Activated T-helper 2 cell treated with anti-CD3 and anti-CD28 coated beads, Interferon-gamma antibody, Interleukin-2, Interleukin-4, amounts not matched to agents 10 μg/mL and 5 μg/mL and 100 μg/mL, durations not matched to agents 14 hours and 24 hours and 36 hours (primary cell): ENCODE measurements at regions of chrX and their contacts with region 1.

Region 1: GRCh38 chrX:97039363-97040029 is 155.8 kb downstream of the RPA4 start:
- DNase-seq: no peak
- H3K4me3 Mint-ChIP-seq: no peak overlapping the region
- H3K27ac Mint-ChIP-seq: peak overlapping the region; percentile 50
- H3K4me1 Mint-ChIP-seq: peaks cover 16% of the 10 kb centered on the region
- H3K27me3 Mint-ChIP-seq: no peaks in the 10 kb centered on the region

Region 2: DNA sequence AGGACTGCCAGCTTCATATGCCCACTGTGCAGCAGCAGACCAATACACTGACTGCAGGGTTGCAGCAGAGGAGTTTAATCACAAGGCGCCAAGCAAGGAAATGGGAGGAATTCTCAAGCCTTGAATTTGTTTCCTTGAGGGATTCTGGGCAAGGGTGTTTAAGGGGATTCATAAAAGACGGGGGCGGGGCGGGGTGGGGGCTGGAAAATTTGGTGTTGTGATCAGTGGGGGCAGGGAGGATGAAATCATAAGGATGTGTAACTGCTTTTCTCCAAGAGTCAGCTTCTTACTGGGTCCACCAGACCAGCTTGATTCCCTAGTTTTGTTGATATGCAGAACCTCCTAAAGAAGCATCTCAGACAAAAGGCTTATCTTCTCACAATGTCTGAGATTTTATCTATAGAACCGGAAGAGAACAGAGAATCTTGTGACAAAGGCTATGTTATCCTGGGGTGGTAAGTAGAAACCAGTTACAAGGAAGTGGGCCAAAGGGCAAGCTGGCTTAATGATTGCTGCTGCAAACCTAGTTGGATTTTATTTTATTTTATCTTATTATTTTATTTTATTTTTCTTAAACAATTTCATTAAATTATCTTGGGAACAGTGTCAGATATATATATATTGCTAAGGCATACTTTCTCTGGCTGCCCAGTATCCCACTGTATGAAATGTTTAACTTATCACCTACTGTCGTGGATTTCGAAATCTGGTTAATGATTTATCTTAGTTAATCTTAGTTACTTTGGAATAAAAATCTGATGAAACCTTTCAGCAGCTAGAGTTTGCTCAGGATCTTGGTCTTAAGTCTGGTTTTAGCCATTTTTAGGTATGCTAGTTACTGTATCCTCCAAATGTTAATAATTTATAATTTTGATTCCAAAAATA is 120.7 kb after region 1 on chrX:
- intact Hi-C with region 1: loop called (anchors 10 kb)
- DNase-seq: no peak
- H3K4me3 Mint-ChIP-seq: no peak overlapping the region
- H3K27ac Mint-ChIP-seq: no peak overlapping the region
- H3K4me1 Mint-ChIP-seq: peaks cover 4% of the 10 kb centered on the region
- H3K27me3 Mint-ChIP-seq: no peaks in the 10 kb centered on the region

Region 3: DNA sequence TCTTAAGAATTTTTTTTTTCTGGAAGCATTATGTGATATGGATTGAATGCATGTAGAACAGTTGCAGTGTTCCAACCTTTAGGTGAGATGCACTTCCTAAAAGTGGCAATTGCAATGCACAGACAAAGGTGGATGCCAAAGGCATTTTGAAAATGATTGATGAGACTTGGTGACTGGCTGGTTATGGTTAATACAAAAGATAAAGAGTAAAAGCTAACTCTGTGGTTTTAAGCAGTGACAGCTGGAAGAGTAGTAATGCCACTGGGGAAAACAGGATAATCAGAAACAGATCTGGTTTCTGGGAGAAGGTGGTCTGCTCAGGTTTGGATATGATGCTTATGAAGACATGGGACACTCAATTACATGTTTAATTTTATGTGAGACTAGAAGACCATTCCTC is 189.8 kb after region 1 on chrX:
- intact Hi-C with region 1: no loop called
- DNase-seq: no peak
- H3K4me3 Mint-ChIP-seq: no peak overlapping the region
- H3K27ac Mint-ChIP-seq: no peak overlapping the region
- H3K4me1 Mint-ChIP-seq: no peaks in the 10 kb centered on the region
- H3K27me3 Mint-ChIP-seq: no peaks in the 10 kb centered on the region

Region 4: DNA sequence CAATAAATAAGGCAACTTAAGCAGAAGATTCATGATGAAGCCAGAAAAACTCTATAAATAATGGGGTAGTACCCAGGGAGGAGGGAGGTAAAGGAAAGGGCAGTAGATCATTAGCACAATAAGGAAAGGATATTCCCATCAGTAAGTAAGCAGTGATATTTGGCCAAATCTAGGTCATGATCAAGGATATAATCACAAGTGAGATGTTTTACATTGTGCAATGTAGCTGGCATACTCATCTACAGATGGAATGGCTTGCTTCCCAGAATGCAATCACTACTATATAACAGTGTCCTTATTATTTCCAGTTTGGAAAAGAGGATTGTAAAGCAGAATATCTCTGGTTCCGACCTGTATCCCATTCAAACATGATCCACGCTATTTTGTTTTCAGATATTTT is 327.6 kb after region 1 on chrX:
- intact Hi-C with region 1: no loop called
- DNase-seq: no peak
- H3K4me3 Mint-ChIP-seq: no peak overlapping the region
- H3K27ac Mint-ChIP-seq: no peak overlapping the region
- H3K4me1 Mint-ChIP-seq: no peaks in the 10 kb centered on the region
- H3K27me3 Mint-ChIP-seq: no peaks in the 10 kb centered on the region

Region 5: GRCh38 chrX:97494756-97495372 is 455.4 kb after region 1 on chrX:
- intact Hi-C with region 1: loop called (anchors 10 kb)
- DNase-seq: no peak
- H3K4me3 Mint-ChIP-seq: no peak overlapping the region
- H3K27ac Mint-ChIP-seq: no peak overlapping the region
- H3K4me1 Mint-ChIP-seq: peaks cover 7% of the 10 kb centered on the region
- H3K27me3 Mint-ChIP-seq: no peaks in the 10 kb centered on the region